Motor neuron (in vitro differentiated cells): ENCODE measurements at regions of chr3 and their contacts with region 1.

Region 1: GRCh38 chr3:124467980-124468902 is 262.0 kb upstream of the UMPS start:
- ATAC-seq: peak; percentile 69 to 99 (median 84)
- H3K4me3 ChIP-seq: no peak overlapping the region
- H3K27ac ChIP-seq: no peak overlapping the region
- H3K4me1 ChIP-seq: peaks cover 0 to 2% of the 10 kb centered on the region in 2 donors

Region 2: GRCh38 chr3:124032648-124033359 is 435.4 kb before region 1 on chr3:
- in situ Hi-C with region 1: loop called in 1 of 9 experiments (anchors 25 kb)
- ATAC-seq: peak; percentile 79 to 91 (median 82)
- H3K4me3 ChIP-seq: peak overlapping the region; percentile 64 to 99 (median 80)
- H3K27ac ChIP-seq: peak overlapping the region; percentile 95 to 98
- H3K4me1 ChIP-seq: peaks cover 22 to 26% of the 10 kb centered on the region in 2 donors

Region 3: DNA sequence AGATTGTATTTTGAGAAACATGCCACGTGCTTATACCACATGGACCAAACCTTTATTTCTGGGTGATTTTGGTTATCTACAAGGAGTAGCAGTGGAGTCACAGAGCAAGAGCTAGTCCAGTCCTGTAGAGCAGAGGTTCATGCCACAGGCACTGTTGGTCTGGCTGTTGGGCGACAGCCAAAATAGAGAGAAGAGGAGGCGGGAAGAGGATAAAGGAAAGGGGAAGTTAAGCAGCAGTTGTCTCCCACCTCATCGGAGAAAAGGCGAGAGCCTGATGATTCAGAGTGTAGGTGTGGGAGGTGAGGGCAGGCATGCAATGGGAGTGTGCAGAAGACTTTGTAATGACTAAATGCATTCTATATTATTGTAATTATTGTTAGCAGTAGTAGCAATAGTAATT is 238.8 kb before region 1 on chr3:
- in situ Hi-C with region 1: no loop called
- ATAC-seq: peak in 4 of 8 experiments; percentile 20 to 92 (median 42)
- H3K4me3 ChIP-seq: no peak overlapping the region
- H3K27ac ChIP-seq: no peak overlapping the region
- H3K4me1 ChIP-seq: peaks cover 3 to 8% of the 10 kb centered on the region in 2 donors

Region 4: DNA sequence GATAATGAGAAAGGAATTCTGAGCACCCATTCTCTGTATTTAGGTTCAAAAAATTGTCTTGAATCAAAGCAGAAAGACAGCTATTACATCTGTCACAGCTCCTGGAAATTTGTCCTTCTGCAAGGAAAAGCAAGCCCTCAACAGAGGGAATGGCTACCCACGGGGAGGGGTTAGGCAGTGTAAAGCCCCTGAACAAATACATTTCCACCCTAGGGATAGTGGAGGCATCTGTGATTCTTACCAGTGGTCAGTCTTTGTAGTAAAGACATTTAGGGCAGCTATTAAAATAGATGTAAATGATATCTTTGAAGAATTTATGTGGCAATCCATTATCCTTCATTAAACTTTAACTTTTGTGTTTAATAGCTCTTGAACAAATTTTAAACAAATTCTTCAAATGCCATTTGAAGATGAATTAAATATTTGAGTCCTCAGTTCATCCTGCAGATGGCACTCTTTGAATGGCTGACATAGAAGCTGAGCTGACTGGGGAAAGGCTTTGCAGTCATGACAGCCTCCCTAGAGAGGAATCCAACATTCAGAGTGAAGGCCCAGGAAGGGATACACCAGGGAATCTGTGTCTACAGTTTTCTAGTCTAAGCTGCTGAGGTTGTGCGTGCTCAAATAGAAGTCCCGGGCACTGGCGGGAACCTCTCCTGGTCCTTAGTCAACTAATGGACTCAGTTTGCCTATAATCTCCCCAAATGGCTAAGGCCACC is 116.7 kb before region 1 on chr3:
- in situ Hi-C with region 1: loop called in 4 of 9 experiments (anchors 10 to 25 kb)
- ATAC-seq: peak; percentile 85 to 100 (median 97)
- H3K4me3 ChIP-seq: no peak overlapping the region
- H3K27ac ChIP-seq: no peak overlapping the region
- H3K4me1 ChIP-seq: peaks cover 3 to 6% of the 10 kb centered on the region in 2 donors

Region 5: DNA sequence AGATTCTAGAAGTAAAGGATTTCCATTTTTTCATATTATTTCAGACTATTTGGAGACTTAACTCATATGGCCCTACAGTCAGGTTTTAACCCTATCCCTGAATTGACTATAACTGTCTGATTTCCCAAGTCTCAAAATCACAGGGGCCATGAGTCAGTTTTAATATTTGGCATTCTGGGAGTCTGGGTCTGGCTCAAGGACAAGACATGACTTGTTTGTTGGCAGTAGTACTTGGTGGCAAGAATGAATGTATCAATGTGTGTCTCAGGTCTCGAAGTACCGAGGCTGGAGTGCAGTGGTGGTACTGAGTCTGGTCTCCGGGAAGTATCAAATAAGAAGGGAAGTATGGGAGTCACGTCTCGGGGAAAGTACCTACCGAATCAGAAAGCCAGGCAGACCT is 272.8 kb after region 1 on chr3:
- in situ Hi-C with region 1: no loop called
- ATAC-seq: no peak
- H3K4me3 ChIP-seq: no peak overlapping the region
- H3K27ac ChIP-seq: no peak overlapping the region
- H3K4me1 ChIP-seq: no peaks in the 10 kb centered on the region